ENCODE measurements at regions of chr1 and their contacts with region 1.

Region 1: GRCh38 chr1:161367684-161368400 is at the start of gene CFAP126:
- DNase-seq: peak; percentile 60
- ATAC-seq: peak; percentile 99
- H3K4me3 Mint-ChIP-seq: no peak within 1 kb of the TSS
- H3K27ac Mint-ChIP-seq: peak within 1 kb of the TSS; percentile 17
- H3K4me1 Mint-ChIP-seq: peaks cover 19% of the 10 kb centered on the region
- H3K27me3 Mint-ChIP-seq: no peaks in the 10 kb centered on the region
- total RNA-seq, gene CFAP126: not detected

Region 2: GRCh38 chr1:160997323-160998038 is 370.4 kb before region 1 on chr1:
- CTCF ChIA-PET with region 1: interaction called, 3 read pairs
- POLR2A ChIA-PET with region 1: no interaction called
- intact Hi-C with region 1: loop called in 1 of 2 experiments (anchors 5 kb)
- DNase-seq: peak; percentile 71
- ATAC-seq: peak; percentile 81
- H3K4me3 Mint-ChIP-seq: no peak overlapping the region
- H3K27ac Mint-ChIP-seq: peak overlapping the region; percentile 58
- H3K4me1 Mint-ChIP-seq: peaks cover 18% of the 10 kb centered on the region
- H3K27me3 Mint-ChIP-seq: no peaks in the 10 kb centered on the region

Region 3: GRCh38 chr1:161314201-161314981 is 53.5 kb before region 1 on chr1 and contains the start of gene SDHC:
- CTCF ChIA-PET with region 1: no interaction called
- POLR2A ChIA-PET with region 1: no interaction called
- intact Hi-C with region 1: loop called in 1 of 2 experiments (anchors 10 kb)
- DNase-seq: peak; percentile 94
- ATAC-seq: peak; percentile 98
- H3K4me3 Mint-ChIP-seq: peak within 1 kb of the TSS; percentile 96
- H3K27ac Mint-ChIP-seq: peak within 1 kb of the TSS; percentile 96
- H3K4me1 Mint-ChIP-seq: peaks cover 21% of the 10 kb centered on the region
- H3K27me3 Mint-ChIP-seq: no peaks in the 10 kb centered on the region
- total RNA-seq, gene SDHC: 191 to 235 TPM

Region 4: GRCh38 chr1:162319493-162320175 is 951.8 kb after region 1 on chr1:
- CTCF ChIA-PET with region 1: no interaction called
- POLR2A ChIA-PET with region 1: no interaction called
- intact Hi-C with region 1: no loop called
- DNase-seq: no peak
- ATAC-seq: no peak
- H3K4me3 Mint-ChIP-seq: no peak overlapping the region
- H3K27ac Mint-ChIP-seq: no peak overlapping the region
- H3K4me1 Mint-ChIP-seq: no peaks in the 10 kb centered on the region
- H3K27me3 Mint-ChIP-seq: peaks cover 11% of the 10 kb centered on the region